Naive thymus-derived CD4-positive, alpha-beta T cell (primary cell): ENCODE measurements at regions of chr20 and their contacts with region 1.

Region 1: GRCh38 chr20:32031007-32031958 is 20.8 kb upstream of the HCK start:
- DNase-seq: peak; percentile 22 to 67 (median 50)
- ATAC-seq: peak; percentile 68
- H3K4me3 ChIP-seq: peak overlapping the region; percentile 35
- H3K4me3 Mint-ChIP-seq: peak overlapping the region in 8 of 10 donors; percentile 29 to 66 (median 52)
- H3K27ac ChIP-seq: no peak overlapping the region
- H3K27ac Mint-ChIP-seq: no peak overlapping the region
- H3K4me1 ChIP-seq: peaks cover 0 to 4% of the 10 kb centered on the region in 2 donors
- H3K4me1 Mint-ChIP-seq: peaks cover 0 to 4% (median 0%) of the 10 kb centered on the region in 7 donors
- H3K27me3 ChIP-seq: no peaks in the 10 kb centered on the region
- H3K27me3 Mint-ChIP-seq: peaks cover 16 to 62% (median 29%) of the 10 kb centered on the region in 5 donors

Region 2: GRCh38 chr20:31822421-31823330 is 208.6 kb before region 1 on chr20:
- CTCF ChIA-PET with region 1: interaction called, 35 read pairs
- POLR2A ChIA-PET with region 1: no interaction called
- intact Hi-C with region 1: loop called (anchors 1 kb)
- DNase-seq: peak; percentile 40 to 80 (median 73)
- ATAC-seq: peak; percentile 91
- H3K4me3 ChIP-seq: no peak overlapping the region
- H3K4me3 Mint-ChIP-seq: peak overlapping the region in 5 of 10 donors; percentile 27 to 47 (median 30)
- H3K27ac ChIP-seq: no peak overlapping the region
- H3K27ac Mint-ChIP-seq: peak overlapping the region in 2 of 9 donors; percentile 47 to 59
- H3K4me1 ChIP-seq: peaks cover 0 to 4% of the 10 kb centered on the region in 2 donors
- H3K4me1 Mint-ChIP-seq: peaks cover 0 to 9% (median 0%) of the 10 kb centered on the region in 7 donors
- H3K27me3 ChIP-seq: no peaks in the 10 kb centered on the region
- H3K27me3 Mint-ChIP-seq: peaks cover 0 to 4% (median 0%) of the 10 kb centered on the region in 5 donors

Region 3: GRCh38 chr20:31849455-31849925 is 181.8 kb before region 1 on chr20:
- CTCF ChIA-PET with region 1: interaction called, 4 read pairs
- POLR2A ChIA-PET with region 1: no interaction called
- intact Hi-C with region 1: loop called in 1 of 2 experiments (anchors 2 kb)
- DNase-seq: no peak
- ATAC-seq: no peak
- H3K4me3 ChIP-seq: no peak overlapping the region
- H3K4me3 Mint-ChIP-seq: no peak overlapping the region
- H3K27ac ChIP-seq: no peak overlapping the region
- H3K27ac Mint-ChIP-seq: no peak overlapping the region
- H3K4me1 ChIP-seq: no peaks in the 10 kb centered on the region
- H3K4me1 Mint-ChIP-seq: no peaks in the 10 kb centered on the region
- H3K27me3 ChIP-seq: no peaks in the 10 kb centered on the region
- H3K27me3 Mint-ChIP-seq: peaks cover 15 to 32% (median 18%) of the 10 kb centered on the region in 5 donors

Region 4: GRCh38 chr20:32018269-32019074 is 12.8 kb before region 1 on chr20:
- CTCF ChIA-PET with region 1: interaction called, 7 read pairs
- POLR2A ChIA-PET with region 1: interaction called, 3 read pairs
- intact Hi-C with region 1: loop called in 1 of 2 experiments (anchors 1 kb)
- DNase-seq: peak in 8 of 9 donors; percentile 17 to 59 (median 36)
- ATAC-seq: peak; percentile 61
- H3K4me3 ChIP-seq: peak overlapping the region; percentile 48
- H3K4me3 Mint-ChIP-seq: peak overlapping the region; percentile 54 to 91 (median 82)
- H3K27ac ChIP-seq: no peak overlapping the region
- H3K27ac Mint-ChIP-seq: no peak overlapping the region
- H3K4me1 ChIP-seq: peaks cover 0 to 6% of the 10 kb centered on the region in 2 donors
- H3K4me1 Mint-ChIP-seq: peaks cover 10 to 28% (median 23%) of the 10 kb centered on the region in 7 donors
- H3K27me3 ChIP-seq: peaks cover 0 to 3% of the 10 kb centered on the region in 2 donors
- H3K27me3 Mint-ChIP-seq: peaks cover 66 to 81% (median 70%) of the 10 kb centered on the region in 5 donors

Region 5: GRCh38 chr20:32521780-32522525 is 490.7 kb after region 1 on chr20:
- CTCF ChIA-PET with region 1: no interaction called
- POLR2A ChIA-PET with region 1: no interaction called
- intact Hi-C with region 1: loop called in 1 of 2 experiments (anchors 5 kb)
- DNase-seq: peak; percentile 50 to 76 (median 63)
- ATAC-seq: peak; percentile 89
- H3K4me3 ChIP-seq: peak overlapping the region; percentile 27
- H3K4me3 Mint-ChIP-seq: peak overlapping the region in 9 of 10 donors; percentile 17 to 72 (median 53)
- H3K27ac ChIP-seq: peak overlapping the region; percentile 60
- H3K27ac Mint-ChIP-seq: peak overlapping the region; percentile 63 to 95 (median 90)
- H3K4me1 ChIP-seq: peaks cover 36 to 65% of the 10 kb centered on the region in 2 donors
- H3K4me1 Mint-ChIP-seq: peaks cover 39 to 77% (median 67%) of the 10 kb centered on the region in 7 donors
- H3K27me3 ChIP-seq: no peaks in the 10 kb centered on the region
- H3K27me3 Mint-ChIP-seq: no peaks in the 10 kb centered on the region